ENCODE measurements at regions of chr1 and their contacts with region 1.

Region 1: DNA sequence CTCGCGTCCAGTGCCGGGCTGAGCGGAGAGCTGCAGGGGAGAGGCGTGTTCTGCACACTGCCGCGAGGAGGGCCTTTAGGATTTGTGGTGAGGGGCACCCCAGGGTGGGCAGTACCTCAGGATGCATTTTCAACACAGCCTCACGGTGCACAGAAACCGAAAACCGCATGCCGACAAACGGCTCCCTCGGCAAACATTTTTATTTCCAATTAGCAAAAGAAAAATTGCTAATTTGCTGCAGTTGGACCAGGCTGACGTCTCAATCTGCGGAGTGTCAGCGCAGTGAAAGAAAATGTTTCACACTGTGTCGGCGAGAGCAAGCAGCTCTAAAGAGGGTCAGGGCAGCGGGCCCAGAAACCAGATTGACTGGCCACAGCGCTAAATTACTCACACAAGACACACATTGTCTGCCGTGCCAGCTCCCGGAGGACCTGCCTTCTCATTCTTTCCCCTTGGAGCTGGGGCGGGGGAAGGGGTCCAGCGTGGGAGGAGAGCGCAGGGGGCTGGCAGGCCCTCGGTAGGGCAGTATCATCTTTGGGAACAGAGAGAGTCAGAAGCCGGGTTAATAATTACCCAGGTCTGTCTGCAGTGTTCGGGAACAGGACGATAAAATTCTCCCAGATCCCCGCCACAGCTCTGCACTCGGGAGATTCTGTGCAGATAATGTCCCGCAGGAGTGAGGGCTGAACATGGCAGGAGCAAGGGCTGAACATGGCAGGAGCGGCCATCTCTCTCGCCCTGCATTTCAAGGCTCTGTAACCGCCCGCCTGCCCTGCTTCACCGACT is 150.2 kb downstream of the PRDM16 start:
- DNase-seq: peak; percentile 45 to 97 (median 93)
- H3K4me3 ChIP-seq: peak overlapping the region in 19 of 59 donors; percentile 5 to 44 (median 22)
- H3K27ac ChIP-seq: peak overlapping the region in 47 of 59 donors; percentile 16 to 87 (median 65)
- H3K27me3 ChIP-seq: peaks cover 0 to 18% (median 0%) of the 10 kb centered on the region in 45 donors
- CTCF ChIP-seq: peak in 12 of 56 donors; percentile 5 to 39 (median 19)

Region 2: GRCh38 chr1:3170561-3171453 is 48.4 kb before region 1 on chr1:
- intact Hi-C with region 1: loop called in 1 of 2 experiments (anchors 5 kb)
- DNase-seq: peak; percentile 44 to 86 (median 74)
- H3K4me3 ChIP-seq: peak overlapping the region; percentile 12 to 66 (median 42)
- H3K27ac ChIP-seq: peak overlapping the region in 58 of 59 donors; percentile 23 to 92 (median 80)
- H3K27me3 ChIP-seq: peaks cover 0 to 23% (median 0%) of the 10 kb centered on the region in 45 donors
- CTCF ChIP-seq: no peak

Region 3: DNA sequence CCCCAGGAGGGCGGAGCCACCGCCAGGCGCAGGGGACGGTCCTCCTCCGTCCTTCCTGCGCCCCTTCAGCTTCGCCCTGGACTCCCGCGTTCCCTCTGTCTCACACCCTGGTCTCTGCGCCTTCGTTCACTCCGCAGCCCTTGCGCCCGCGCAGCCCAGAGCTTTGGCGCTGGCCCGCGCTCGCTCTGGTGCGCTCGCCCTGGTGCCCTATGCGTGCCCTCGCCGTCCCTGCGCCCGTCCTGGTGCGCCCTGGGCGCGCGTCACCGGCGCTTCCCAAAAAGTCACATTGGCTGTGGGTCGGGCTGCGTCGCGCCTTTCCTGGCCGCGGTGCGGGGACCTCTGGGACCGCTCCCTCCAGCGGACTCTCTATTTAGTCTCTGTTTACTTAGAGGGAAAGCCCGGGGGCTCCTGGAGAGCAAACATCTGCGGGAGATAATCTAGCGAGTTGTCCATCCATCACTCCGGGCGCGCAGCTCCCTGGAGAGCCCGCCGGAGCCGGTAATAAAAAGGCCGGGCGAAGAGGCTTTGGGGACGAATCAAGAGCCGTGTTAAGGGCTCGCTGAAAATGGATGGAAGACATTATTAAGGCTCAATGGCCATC is 28.4 kb after region 1 on chr1:
- intact Hi-C with region 1: no loop called
- DNase-seq: no peak
- H3K4me3 ChIP-seq: no peak overlapping the region
- H3K27ac ChIP-seq: no peak overlapping the region
- H3K27me3 ChIP-seq: peaks cover 0 to 47% (median 17%) of the 10 kb centered on the region in 45 donors
- CTCF ChIP-seq: no peak

Region 4: GRCh38 chr1:3283849-3284248 is 64.7 kb after region 1 on chr1:
- intact Hi-C with region 1: loop called in 1 of 2 experiments (anchors 5 kb)
- DNase-seq: peak in 6 of 10 donors; percentile 36 to 72 (median 51)
- H3K4me3 ChIP-seq: no peak overlapping the region
- H3K27ac ChIP-seq: peak overlapping the region in 7 of 59 donors; percentile 1 to 41 (median 10)
- H3K27me3 ChIP-seq: peaks cover 0 to 44% (median 0%) of the 10 kb centered on the region in 45 donors
- CTCF ChIP-seq: peak; percentile 43 to 88 (median 77)

Measured in dorsolateral prefrontal cortex (tissue), 120 donors.